ENCODE measurements at regions of chr15 and their contacts with region 1.

Region 1: DNA sequence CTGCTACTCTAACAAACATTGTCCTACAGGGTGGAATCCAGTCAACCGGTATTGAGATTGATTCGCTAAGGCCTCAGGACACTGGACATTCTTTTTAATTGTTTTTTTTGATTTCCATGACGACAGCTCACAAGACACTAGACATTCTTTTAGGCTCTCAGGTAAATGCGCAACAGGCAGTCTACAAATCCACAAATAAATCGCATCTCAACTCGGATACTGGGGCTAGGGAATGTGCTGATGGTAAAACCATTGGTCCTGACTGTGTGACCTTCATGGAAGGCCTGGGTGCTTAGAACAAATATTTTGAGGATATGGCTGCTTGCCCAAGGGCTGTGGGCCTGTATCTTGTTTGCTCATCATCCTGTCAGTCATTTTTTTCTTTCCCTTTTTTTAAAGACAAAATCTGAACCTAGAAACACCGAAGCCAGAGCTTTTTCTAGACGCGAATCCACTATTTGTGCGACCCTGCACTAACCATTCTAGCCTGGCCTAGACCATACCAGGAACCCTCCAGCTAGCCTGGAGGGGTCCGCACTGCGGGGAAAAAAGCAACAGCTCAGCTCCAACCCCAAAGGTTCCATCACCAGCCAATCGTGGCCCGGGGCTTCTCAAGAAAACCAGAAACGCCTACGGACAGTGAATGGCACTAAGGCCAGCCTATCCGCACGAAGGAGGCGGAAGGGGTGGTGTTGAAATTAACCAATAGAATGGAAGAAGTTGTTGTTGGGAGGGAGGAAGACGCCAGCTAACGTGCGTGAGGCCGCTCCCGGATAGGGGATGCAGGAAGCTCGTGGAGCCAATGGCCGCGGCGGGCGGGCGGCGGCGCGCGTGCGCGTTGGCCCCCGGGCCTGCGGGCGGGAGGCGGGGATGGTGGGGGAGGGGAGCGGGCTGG is 18.1 kb upstream of the CHD2 start:
- DNase-seq: peak; percentile 97 to 99 (median 98)
- ATAC-seq: peak; percentile 83 to 86
- H3K4me3 Mint-ChIP-seq: peak overlapping the region; percentile 81 to 96 (median 90)
- H3K27ac Mint-ChIP-seq: peak overlapping the region; percentile 96 to 100 (median 99)
- H3K4me1 Mint-ChIP-seq: peaks cover 40 to 72% (median 63%) of the 10 kb centered on the region in 4 donors
- H3K27me3 Mint-ChIP-seq: no peaks in the 10 kb centered on the region

Region 2: DNA sequence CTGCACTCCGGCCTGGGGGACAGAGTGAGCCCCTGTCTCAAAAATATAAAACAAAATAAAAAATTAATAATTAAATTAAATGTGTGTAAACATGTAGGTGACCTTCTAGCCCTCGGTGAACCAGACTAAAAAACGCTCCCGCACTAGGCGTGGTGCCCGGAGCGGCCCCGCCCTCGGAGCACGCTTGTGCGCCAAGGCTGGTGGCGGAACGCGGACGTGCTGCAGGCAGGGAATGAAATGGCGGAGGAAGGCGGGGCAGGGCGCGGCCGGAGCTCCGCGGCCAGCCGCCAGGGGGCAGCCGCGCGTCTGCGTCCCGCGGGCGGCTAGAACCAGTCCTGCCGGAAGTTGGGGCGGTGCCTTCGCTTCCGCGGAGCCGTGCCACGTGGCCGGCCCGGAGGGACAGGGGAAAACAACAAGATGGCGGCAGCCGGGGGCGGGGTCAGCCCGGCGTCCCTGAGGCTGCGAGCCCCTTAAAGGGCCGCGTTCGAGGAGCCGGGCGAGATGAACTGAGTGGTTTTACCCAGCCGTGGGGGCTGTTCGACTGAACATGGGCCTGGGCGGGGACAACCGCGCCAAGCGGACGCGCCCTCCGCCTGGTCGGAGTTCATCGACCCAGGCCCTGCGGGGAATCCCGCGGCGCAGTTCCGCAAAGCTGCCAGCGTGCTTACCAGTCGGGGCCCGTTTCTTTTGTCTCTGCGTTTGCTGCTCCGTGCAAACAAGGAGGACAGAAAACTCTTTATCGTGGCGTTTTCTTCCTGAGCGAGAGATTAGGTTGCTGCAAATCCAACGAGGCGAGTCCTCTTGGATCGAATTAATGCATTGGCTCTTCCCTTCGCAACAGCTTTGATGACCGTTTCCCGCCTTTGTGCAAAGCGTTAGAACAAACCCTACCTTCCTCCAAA is 72.8 kb before region 1 on chr15:
- POLR2A ChIA-PET with region 1: interaction called, 681 read pairs
- DNase-seq: peak; percentile 98 to 100 (median 98)
- ATAC-seq: peak; percentile 75 to 77
- H3K4me3 Mint-ChIP-seq: peak overlapping the region; percentile 82 to 96 (median 93)
- H3K27ac Mint-ChIP-seq: peak overlapping the region; percentile 92 to 99 (median 99)
- H3K4me1 Mint-ChIP-seq: peaks cover 12 to 55% (median 44%) of the 10 kb centered on the region in 4 donors
- H3K27me3 Mint-ChIP-seq: no peaks in the 10 kb centered on the region

Region 3: GRCh38 chr15:92831655-92832328 is 50.3 kb before region 1 on chr15:
- POLR2A ChIA-PET with region 1: interaction called, 352 read pairs
- DNase-seq: peak; percentile 77 to 97 (median 87)
- ATAC-seq: peak; percentile 91 to 94
- H3K4me3 Mint-ChIP-seq: peak overlapping the region; percentile 70 to 86 (median 81)
- H3K27ac Mint-ChIP-seq: peak overlapping the region; percentile 94 to 98 (median 97)
- H3K4me1 Mint-ChIP-seq: peaks cover 18 to 55% (median 46%) of the 10 kb centered on the region in 4 donors
- H3K27me3 Mint-ChIP-seq: no peaks in the 10 kb centered on the region

Region 4: GRCh38 chr15:92861742-92862141 is 20.3 kb before region 1 on chr15:
- POLR2A ChIA-PET with region 1: interaction called, 53 read pairs
- DNase-seq: no peak
- ATAC-seq: no peak
- H3K4me3 Mint-ChIP-seq: no peak overlapping the region
- H3K27ac Mint-ChIP-seq: no peak overlapping the region
- H3K4me1 Mint-ChIP-seq: peaks cover 2 to 4% (median 3%) of the 10 kb centered on the region in 4 donors
- H3K27me3 Mint-ChIP-seq: no peaks in the 10 kb centered on the region

Region 5: GRCh38 chr15:92903941-92904831 is 22.1 kb after region 1 on chr15:
- POLR2A ChIA-PET with region 1: interaction called, 659 read pairs
- DNase-seq: peak; percentile 98 to 100 (median 99)
- ATAC-seq: peak; percentile 78 to 85
- H3K4me3 Mint-ChIP-seq: peak overlapping the region; percentile 92 to 100 (median 98)
- H3K27ac Mint-ChIP-seq: peak overlapping the region; percentile 96 to 100 (median 100)
- H3K4me1 Mint-ChIP-seq: peaks cover 35 to 74% (median 58%) of the 10 kb centered on the region in 4 donors
- H3K27me3 Mint-ChIP-seq: no peaks in the 10 kb centered on the region

Region 6: GRCh38 chr15:92944946-92945521 is 63.0 kb after region 1 on chr15:
- POLR2A ChIA-PET with region 1: no interaction called
- DNase-seq: no peak
- ATAC-seq: no peak
- H3K4me3 Mint-ChIP-seq: peak overlapping the region in 1 of 10 donors; percentile 6
- H3K27ac Mint-ChIP-seq: peak overlapping the region in 9 of 10 donors; percentile 25 to 86 (median 63)
- H3K4me1 Mint-ChIP-seq: peaks cover 7 to 29% (median 15%) of the 10 kb centered on the region in 4 donors
- H3K27me3 Mint-ChIP-seq: no peaks in the 10 kb centered on the region

Measured in naive thymus-derived CD8-positive, alpha-beta T cell (primary cell).